ENCODE measurements at regions of chr1 and their contacts with region 1.

Region 1: GRCh38 chr1:197744979-197745378 is 30.3 kb downstream of the DENND1B start:
- DNase-seq: no peak
- ATAC-seq: no peak
- H3K4me3 ChIP-seq: no peak overlapping the region
- H3K27ac ChIP-seq: no peak overlapping the region
- H3K4me1 ChIP-seq: peaks cover 2% of the 10 kb centered on the region
- H3K27me3 ChIP-seq: no peaks in the 10 kb centered on the region
- CTCF ChIP-seq: no peak
- POLR2A ChIP-seq: no peak
- RAD21 ChIP-seq: no peak

Region 2: GRCh38 chr1:197761621-197762020 is 16.6 kb after region 1 on chr1:
- CTCF ChIA-PET with region 1: interaction called, 3 read pairs
- POLR2A ChIA-PET with region 1: interaction called, 6 read pairs
- dilution Hi-C with region 1: no loop called
- in situ Hi-C with region 1: no loop called
- intact Hi-C with region 1: loop called (anchors 2 kb)
- DNase-seq: no peak
- ATAC-seq: no peak
- H3K4me3 ChIP-seq: no peak overlapping the region
- H3K27ac ChIP-seq: no peak overlapping the region
- H3K4me1 ChIP-seq: peaks cover 2% of the 10 kb centered on the region; the same call in 1 of the 2 replicates
- H3K27me3 ChIP-seq: no peaks in the 10 kb centered on the region
- CTCF ChIP-seq: no peak
- POLR2A ChIP-seq: no peak
- RAD21 ChIP-seq: no peak

Measured in IMR-90 (cell line).